Motor neuron (in vitro differentiated cells): ENCODE measurements at regions of chr3 and their contacts with region 1.

Region 1: DNA sequence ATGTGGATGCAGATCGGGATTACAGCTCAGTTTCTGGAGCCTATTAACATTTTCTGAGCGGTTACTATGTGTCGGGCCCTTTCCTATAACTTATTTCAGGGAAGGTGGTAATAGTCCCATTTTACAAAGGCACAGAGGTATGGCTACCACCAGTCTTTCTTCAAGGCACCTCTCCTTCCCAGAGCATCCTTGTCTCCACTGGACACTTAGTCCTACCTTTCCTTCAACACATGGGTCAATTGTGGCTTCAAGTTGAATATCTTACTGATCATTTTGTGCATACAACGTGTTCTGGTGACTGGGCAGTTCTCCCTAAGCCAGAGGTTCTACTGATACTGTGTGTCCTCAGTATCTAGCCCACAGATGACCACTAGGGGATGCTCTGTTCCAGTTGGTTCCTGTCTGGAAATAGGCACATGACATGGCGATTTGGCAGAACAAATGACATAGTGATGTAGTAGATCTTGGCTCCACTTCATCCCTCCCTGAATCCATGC is 60.7 kb upstream of the CMTM8 start:
- ATAC-seq: peak in 5 of 8 experiments; percentile 38 to 95 (median 92)
- H3K4me3 ChIP-seq: no peak overlapping the region
- H3K27ac ChIP-seq: no peak overlapping the region
- H3K4me1 ChIP-seq: peaks cover 0 to 4% of the 10 kb centered on the region in 2 donors

Region 2: DNA sequence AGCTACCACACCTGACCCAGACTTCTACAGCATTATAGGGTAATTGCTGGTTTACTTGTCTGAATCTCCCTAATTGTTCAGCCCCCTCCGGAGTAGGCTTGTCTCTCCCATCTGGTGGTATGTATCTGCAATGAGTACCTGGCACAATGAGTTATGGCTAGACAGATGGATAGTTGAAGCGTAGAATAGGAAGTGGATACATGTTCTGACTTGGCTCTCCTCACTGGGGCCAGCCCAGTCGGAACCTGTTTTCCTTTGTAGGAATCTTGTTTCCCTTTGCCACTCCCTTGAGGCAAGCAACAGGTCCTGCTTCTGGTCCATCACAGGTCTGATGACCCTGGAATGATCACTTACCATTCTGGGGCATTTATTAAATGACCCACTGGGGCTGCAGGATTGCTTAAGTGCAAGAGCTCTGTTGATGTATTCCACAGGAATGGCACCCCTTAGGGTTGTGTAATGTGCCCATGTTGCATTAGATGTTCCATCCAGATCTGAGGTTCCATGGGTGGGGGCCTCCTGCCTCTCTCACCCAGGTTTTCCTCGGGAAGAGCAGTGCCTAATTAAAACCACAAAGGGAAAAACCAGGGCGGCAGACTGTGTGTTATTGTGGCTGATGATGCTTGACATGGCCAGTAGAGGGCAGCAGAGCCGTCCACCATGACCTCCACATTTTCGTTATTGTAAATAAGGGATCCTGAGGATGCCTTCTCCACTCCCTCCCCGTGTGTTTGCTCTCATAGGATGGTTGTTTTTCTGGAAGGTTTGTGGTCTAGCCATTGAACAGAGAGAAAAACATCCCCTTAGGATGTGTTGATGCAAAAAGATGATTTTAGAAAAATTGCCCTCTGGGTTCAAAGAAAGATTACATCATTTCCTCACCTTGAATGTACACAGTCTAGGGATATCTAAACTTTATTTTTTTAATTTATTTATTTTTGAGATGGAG is 118.8 kb after region 1 on chr3:
- in situ Hi-C with region 1: loop called in 1 of 9 experiments (anchors 25 kb)
- ATAC-seq: peak; percentile 69 to 92 (median 80)
- H3K4me3 ChIP-seq: no peak overlapping the region
- H3K27ac ChIP-seq: no peak overlapping the region
- H3K4me1 ChIP-seq: no peaks in the 10 kb centered on the region

Region 3: DNA sequence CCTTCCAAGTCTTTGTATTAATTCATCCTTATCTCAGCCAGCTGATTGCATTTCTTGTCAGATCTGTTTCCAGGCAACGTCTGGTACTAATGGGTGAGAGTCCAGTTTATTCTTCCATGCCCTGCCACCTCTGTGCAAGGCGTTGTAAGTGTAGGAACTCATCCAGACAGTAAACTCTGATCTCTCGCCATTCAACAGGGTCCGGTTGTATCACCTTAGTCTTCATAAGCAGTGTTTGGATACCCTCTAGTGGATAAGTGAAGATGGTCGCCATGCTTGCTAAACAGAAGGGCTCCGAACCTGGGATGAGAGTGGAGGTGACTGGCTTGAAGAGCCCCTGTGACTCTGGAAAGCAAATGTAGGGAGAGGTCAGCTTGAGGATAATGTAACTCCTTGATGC is 162.3 kb after region 1 on chr3:
- in situ Hi-C with region 1: loop called in 1 of 9 experiments (anchors 25 kb)
- ATAC-seq: peak; percentile 75 to 97 (median 90)
- H3K4me3 ChIP-seq: no peak overlapping the region
- H3K27ac ChIP-seq: no peak overlapping the region
- H3K4me1 ChIP-seq: peaks cover 0 to 6% of the 10 kb centered on the region in 2 donors

Region 4: DNA sequence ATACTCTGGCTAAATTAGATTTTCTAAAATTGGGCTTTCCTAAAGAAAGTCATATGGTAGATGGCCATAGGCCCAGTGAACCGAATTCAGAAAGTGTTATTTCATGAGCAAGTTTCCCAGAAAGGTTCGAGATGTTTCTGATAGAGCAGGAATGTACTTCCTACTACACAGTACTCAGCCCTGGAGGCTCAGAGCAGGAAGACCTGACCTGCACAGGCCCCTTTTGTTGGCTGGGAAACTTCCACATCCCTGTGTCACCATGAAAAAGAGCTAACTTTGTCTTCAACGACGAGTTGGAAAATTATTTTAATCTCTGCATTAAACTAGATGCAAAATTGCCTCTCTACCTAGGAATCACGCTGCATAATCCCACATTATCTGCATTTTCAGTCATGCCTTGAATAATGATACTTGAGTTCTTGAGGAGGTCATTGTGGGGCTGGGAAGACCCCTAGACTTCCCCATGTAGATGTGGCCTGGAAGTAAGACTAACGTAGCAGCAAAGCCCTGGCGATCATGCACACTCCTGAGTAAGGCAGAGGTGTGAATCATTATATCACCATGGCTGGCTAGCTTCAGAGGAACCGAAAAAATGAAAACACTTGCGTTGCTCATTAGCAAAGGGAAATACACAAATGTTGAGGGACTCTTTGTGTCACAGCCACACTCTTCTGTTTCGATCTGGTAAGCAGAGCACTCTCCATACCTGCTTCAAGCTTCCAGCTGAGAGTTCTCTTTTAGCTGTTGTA is 261.0 kb after region 1 on chr3:
- in situ Hi-C with region 1: no loop called
- ATAC-seq: peak in 1 of 8 experiments; percentile 81
- H3K4me3 ChIP-seq: no peak overlapping the region
- H3K27ac ChIP-seq: no peak overlapping the region
- H3K4me1 ChIP-seq: no peaks in the 10 kb centered on the region